ENCODE measurements at regions of chr9 and their contacts with region 1.

Region 1: DNA sequence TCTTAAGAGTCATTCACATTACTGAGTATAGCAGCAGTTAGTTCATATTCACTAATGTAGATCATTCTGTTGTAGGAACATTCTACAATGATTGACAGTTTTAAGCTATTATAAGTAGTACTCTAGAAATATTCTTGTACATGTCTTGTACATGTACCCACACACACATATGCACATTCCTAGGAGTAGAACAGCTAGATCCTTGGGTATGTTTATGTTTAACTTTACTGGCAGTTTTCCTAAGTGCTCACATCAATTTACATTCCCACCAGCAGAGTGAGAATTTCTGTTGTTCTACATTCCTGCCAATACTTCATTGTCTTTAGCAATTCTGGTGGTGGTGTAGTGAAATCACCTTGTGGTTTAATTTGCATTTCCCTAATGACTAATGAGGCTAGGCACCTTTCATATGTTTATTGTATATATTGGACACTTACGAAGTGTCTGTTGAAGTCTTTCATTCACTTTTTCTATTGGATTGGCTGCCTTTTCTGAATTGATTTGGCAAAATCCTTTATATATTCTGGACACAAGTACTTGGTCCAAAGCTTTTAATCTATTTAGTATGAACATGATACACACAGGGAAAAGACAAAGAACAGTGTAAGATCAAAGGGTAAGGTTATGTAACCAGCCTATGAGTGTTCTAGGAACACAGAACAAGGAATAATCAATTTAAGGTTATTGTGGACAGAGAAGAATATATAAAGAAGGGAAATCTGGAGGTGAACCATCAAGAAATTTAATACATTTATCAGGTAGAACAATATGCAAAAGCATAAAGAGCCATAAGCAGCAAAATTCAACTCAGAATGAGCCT is 95.6 kb downstream of the MLLT3 start:
- DNase-seq: no peak
- H3K4me3 ChIP-seq: no peak overlapping the region
- H3K4me3 Mint-ChIP-seq: no peak overlapping the region
- H3K27ac ChIP-seq: no peak overlapping the region
- H3K27ac Mint-ChIP-seq: no peak overlapping the region
- H3K4me1 ChIP-seq: no peaks in the 10 kb centered on the region
- H3K4me1 Mint-ChIP-seq: peaks cover 1% of the 10 kb centered on the region
- H3K27me3 ChIP-seq: no peaks in the 10 kb centered on the region
- H3K27me3 Mint-ChIP-seq: peaks cover 0 to 3% (median 0%) of the 10 kb centered on the region in 3 donors
- CTCF ChIP-seq: no peak

Region 2: GRCh38 chr9:20582150-20582549 is 55.4 kb after region 1 on chr9:
- intact Hi-C with region 1: loop called in 1 of 2 experiments (anchors 10 kb)
- DNase-seq: no peak
- H3K4me3 ChIP-seq: no peak overlapping the region
- H3K4me3 Mint-ChIP-seq: no peak overlapping the region
- H3K27ac ChIP-seq: no peak overlapping the region
- H3K27ac Mint-ChIP-seq: no peak overlapping the region
- H3K4me1 ChIP-seq: peaks cover 0 to 3% of the 10 kb centered on the region in 2 donors
- H3K4me1 Mint-ChIP-seq: peaks cover 9% of the 10 kb centered on the region
- H3K27me3 ChIP-seq: no peaks in the 10 kb centered on the region
- H3K27me3 Mint-ChIP-seq: no peaks in the 10 kb centered on the region
- CTCF ChIP-seq: no peak